H1 (cell line): ENCODE measurements at regions of chr14 and their contacts with region 1.

Region 1: DNA sequence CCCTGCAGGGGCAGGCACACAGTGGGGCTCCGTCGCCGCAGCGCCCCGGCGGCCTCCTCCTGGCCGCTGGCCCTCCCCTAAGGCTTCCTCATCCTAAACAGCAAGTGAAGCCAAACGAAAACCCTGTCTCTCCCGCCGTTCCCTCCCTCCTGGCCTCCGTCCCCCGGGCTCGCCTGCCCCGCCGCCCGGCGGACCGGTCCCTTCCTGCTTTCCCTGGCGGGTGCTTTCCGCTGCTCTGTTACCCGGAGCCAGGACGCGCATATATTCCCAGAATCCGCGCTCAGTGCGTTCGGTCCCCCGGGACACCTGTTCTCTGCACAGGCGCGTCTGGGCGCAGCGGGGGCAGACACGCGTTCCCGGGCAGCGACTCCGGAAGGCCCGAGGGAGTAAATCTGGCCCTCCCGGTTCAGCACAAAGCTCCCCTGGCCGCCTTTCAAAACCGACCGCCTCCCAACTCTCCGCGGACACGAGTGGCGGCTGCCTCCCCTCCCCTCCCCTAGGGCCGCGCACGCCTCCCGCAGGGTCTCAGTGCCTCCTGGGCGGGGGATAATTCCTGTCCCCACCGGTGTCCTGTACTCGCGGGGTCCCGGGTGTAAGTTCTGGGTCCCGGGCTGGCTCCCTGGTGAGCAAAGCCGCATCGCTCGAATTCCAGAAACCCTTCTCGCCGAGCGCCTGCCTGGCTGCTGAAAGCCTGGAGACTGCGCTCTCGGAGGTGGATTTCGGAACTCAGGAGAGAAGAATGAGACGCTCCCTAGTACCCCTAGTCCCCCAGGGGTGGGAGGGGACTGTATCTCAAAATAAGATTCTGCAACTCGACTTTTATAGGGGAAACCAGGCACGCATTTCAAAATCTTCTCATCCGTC is 21.4 kb upstream of the CEP170B start:
- DNase-seq: peak in 1 of 2 experiments; percentile 72
- H3K4me3 ChIP-seq: peak overlapping the region; percentile 38 to 63 (median 52)
- H3K27ac ChIP-seq: no peak overlapping the region
- H3K4me1 ChIP-seq: peaks cover 0 to 18% (median 14%) of the 10 kb centered on the region in 4 experiments; a peak in 6 of 7 replicates
- H3K27me3 ChIP-seq: peaks cover 0 to 18% (median 5%) of the 10 kb centered on the region in 4 experiments; a peak in 5 of 7 replicates
- CTCF ChIP-seq: no peak
- EP300 ChIP-seq: no peak
- POLR2A ChIP-seq: no peak; a peak in 1 of 3 replicates
- RAD21 ChIP-seq: no peak

Region 2: DNA sequence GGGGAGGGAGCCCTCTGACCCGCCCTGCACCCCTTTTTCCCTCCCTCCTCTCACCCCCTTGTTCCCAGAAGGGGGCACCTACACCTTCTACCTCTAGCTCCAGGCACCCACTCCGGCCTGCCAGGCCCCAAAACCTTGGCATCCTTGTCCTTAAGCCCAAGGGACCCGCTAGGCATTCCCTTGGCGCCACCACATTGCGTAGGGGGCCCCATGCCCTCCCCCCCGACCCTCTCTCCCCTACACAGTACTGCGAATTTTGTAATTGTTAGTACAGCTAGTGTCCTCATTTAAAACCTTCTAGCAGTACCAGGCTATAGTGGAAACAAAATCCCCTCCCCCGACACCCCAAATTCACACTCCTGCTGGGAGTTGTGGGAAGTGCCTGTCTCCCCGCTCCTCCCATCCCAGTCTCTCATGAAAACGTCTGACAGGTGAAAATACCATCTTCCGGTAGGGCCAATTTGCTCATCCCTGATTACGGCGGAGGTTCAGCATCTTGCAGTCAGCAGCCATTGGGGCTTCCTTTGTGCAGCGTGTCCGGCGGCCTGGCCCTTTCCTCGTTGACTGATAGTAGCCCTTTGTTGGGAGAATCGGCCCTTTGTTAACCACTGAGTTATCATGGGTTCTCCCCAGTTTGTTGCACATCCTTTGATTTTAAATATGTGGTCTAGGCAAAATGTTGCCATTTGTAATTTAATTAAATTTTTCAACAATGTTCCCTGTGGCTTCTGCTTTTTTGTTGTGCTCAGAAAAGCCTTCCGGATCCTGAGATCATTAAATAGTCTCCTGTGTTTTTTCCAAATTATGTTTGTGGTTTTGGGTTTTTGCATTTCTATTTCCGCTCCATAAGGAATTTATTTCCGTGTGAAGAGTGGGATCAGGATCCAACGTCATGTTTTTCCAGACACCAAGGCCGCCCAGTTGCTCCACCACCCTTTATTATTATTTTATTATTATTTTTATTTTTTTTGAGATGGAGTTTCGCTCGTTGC is 13.5 kb after region 1 on chr14:
- CTCF ChIA-PET with region 1: interaction called, 8 read pairs
- POLR2A ChIA-PET with region 1: interaction called, 82 read pairs
- DNase-seq: no peak
- H3K4me3 ChIP-seq: no peak overlapping the region
- H3K27ac ChIP-seq: no peak overlapping the region
- H3K4me1 ChIP-seq: peaks cover 0 to 10% (median under 1%) of the 10 kb centered on the region in 4 experiments; a peak in 3 of 7 replicates
- H3K27me3 ChIP-seq: peaks cover 0 to under 1% (median 0%) of the 10 kb centered on the region in 4 experiments; a peak in 1 of 7 replicates
- CTCF ChIP-seq: no peak
- EP300 ChIP-seq: no peak
- POLR2A ChIP-seq: no peak
- RAD21 ChIP-seq: no peak

Region 3: GRCh38 chr14:104865644-104866441 is 22.2 kb after region 1 on chr14:
- CTCF ChIA-PET with region 1: interaction called, 5 read pairs
- POLR2A ChIA-PET with region 1: interaction called, 82 read pairs
- DNase-seq: peak in 1 of 2 experiments; percentile 77
- H3K4me3 ChIP-seq: peak overlapping the region; percentile 48 to 79 (median 61)
- H3K27ac ChIP-seq: no peak overlapping the region
- H3K4me1 ChIP-seq: peaks cover 0 to 13% (median 9%) of the 10 kb centered on the region in 4 experiments; a peak in 5 of 7 replicates
- H3K27me3 ChIP-seq: no peaks in the 10 kb centered on the region
- CTCF ChIP-seq: no peak
- EP300 ChIP-seq: no peak
- POLR2A ChIP-seq: no peak
- RAD21 ChIP-seq: no peak

Region 4: GRCh38 chr14:104926619-104927431 is 83.2 kb after region 1 on chr14:
- CTCF ChIA-PET with region 1: no interaction called
- POLR2A ChIA-PET with region 1: no interaction called
- DNase-seq: no peak
- H3K4me3 ChIP-seq: no peak overlapping the region
- H3K27ac ChIP-seq: no peak overlapping the region
- H3K4me1 ChIP-seq: peaks cover 0 to 6% (median 0%) of the 10 kb centered on the region in 4 experiments; a peak in 5 of 7 replicates
- H3K27me3 ChIP-seq: peaks cover 8 to 24% (median 18%) of the 10 kb centered on the region in 4 experiments
- CTCF ChIP-seq: peak in 1 of 3 experiments; percentile 16; a peak in 2 of 4 replicates
- EP300 ChIP-seq: no peak
- POLR2A ChIP-seq: no peak
- RAD21 ChIP-seq: no peak